B cell (primary cell): ENCODE measurements at regions of chr22 and their contacts with region 1.

Region 1: DNA sequence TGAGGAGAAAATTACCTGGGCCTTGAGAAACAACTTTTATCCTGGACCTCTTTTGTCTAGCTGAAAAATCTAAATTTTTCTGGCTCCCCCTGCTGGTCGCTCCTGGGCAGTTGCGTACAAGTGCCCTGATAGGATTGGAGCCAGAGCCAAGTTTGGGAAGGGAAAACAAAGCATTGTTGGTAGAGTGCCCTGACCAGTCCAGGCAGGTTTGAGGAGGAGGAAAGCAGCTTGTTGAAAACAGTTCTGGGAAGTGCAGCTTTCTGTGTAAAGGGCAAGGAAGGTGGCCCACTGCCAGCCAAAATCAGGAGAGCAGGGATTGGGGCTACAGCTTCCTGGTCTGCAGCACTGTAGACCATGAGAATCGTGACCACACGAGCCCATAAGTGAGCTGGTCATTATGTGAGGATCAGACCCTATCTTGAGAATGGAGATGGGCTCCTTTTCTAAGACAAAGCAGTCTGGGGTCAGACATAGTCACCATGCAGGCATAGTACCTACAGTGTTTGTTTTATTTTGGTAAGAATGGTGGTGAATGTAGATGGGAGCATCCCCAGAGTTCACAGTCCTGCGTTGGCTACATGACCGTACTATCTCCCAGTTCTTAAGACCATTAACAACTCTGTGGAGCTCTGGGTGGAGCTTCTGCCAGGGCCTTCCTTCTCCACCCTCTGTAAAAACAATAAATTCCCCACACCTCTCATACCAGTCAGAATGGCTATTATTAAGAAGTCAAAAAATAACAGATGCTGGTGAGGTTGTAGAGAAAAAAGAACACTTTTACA is 21.3 kb upstream of the PIK3IP1 start:
- DNase-seq: peak; percentile 68
- ATAC-seq: peak; percentile 64
- H3K4me3 ChIP-seq: no peak overlapping the region
- H3K4me3 Mint-ChIP-seq: no peak overlapping the region
- H3K27ac ChIP-seq: no peak overlapping the region
- H3K27ac Mint-ChIP-seq: no peak overlapping the region
- H3K4me1 ChIP-seq: peaks cover 2 to 7% of the 10 kb centered on the region in 2 donors
- H3K4me1 Mint-ChIP-seq: peaks cover 10% of the 10 kb centered on the region
- H3K27me3 ChIP-seq: no peaks in the 10 kb centered on the region
- H3K27me3 Mint-ChIP-seq: no peaks in the 10 kb centered on the region
- CTCF ChIP-seq: peak; percentile 94

Region 2: DNA sequence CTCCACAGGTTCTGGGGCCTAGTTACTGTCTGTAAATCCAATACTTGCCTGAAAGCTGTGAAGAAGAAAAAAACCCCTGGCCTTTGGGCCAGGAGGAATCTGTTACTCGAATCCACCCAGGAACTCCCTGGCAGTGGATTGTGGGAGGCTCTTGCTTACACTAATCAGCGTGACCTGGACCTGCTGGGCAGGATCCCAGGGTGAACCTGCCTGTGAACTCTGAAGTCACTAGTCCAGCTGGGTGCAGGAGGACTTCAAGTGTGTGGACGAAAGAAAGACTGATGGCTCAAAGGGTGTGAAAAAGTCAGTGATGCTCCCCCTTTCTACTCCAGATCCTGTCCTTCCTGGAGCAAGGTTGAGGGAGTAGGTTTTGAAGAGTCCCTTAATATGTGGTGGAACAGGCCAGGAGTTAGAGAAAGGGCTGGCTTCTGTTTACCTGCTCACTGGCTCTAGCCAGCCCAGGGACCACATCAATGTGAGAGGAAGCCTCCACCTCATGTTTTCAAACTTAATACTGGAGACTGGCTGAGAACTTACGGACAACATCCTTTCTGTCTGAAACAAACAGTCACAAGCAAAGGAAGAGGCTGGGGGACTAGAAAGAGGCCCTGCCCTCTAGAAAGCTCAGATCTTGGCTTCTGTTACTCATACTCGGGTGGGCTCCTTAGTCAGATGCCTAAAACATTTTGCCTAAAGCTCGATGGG is 34.8 kb before region 1 on chr22:
- CTCF ChIA-PET with region 1: interaction called, 41 read pairs
- POLR2A ChIA-PET with region 1: no interaction called
- intact Hi-C with region 1: no loop called
- DNase-seq: no peak
- ATAC-seq: no peak
- H3K4me3 ChIP-seq: no peak overlapping the region
- H3K4me3 Mint-ChIP-seq: no peak overlapping the region
- H3K27ac ChIP-seq: peak overlapping the region in 1 of 2 donors; percentile 44
- H3K27ac Mint-ChIP-seq: peak overlapping the region; percentile 17
- H3K4me1 ChIP-seq: no peaks in the 10 kb centered on the region
- H3K4me1 Mint-ChIP-seq: peaks cover 5% of the 10 kb centered on the region
- H3K27me3 ChIP-seq: no peaks in the 10 kb centered on the region
- H3K27me3 Mint-ChIP-seq: no peaks in the 10 kb centered on the region
- CTCF ChIP-seq: no peak

Region 3: GRCh38 chr22:31284281-31285155 is 29.0 kb before region 1 on chr22:
- CTCF ChIA-PET with region 1: interaction called, 208 read pairs
- POLR2A ChIA-PET with region 1: no interaction called
- intact Hi-C with region 1: no loop called
- DNase-seq: no peak
- ATAC-seq: no peak
- H3K4me3 ChIP-seq: no peak overlapping the region
- H3K4me3 Mint-ChIP-seq: no peak overlapping the region
- H3K27ac ChIP-seq: peak overlapping the region; percentile 99 to 100
- H3K27ac Mint-ChIP-seq: peak overlapping the region; percentile 78
- H3K4me1 ChIP-seq: peaks cover 48 to 52% of the 10 kb centered on the region in 2 donors
- H3K4me1 Mint-ChIP-seq: peaks cover 47% of the 10 kb centered on the region
- H3K27me3 ChIP-seq: no peaks in the 10 kb centered on the region
- H3K27me3 Mint-ChIP-seq: no peaks in the 10 kb centered on the region
- CTCF ChIP-seq: no peak

Region 4: GRCh38 chr22:31439808-31440207 is 126.3 kb after region 1 on chr22:
- CTCF ChIA-PET with region 1: no interaction called
- POLR2A ChIA-PET with region 1: no interaction called
- intact Hi-C with region 1: no loop called
- DNase-seq: no peak
- ATAC-seq: no peak
- H3K4me3 ChIP-seq: no peak overlapping the region
- H3K4me3 Mint-ChIP-seq: no peak overlapping the region
- H3K27ac ChIP-seq: no peak overlapping the region
- H3K27ac Mint-ChIP-seq: no peak overlapping the region
- H3K4me1 ChIP-seq: no peaks in the 10 kb centered on the region
- H3K4me1 Mint-ChIP-seq: no peaks in the 10 kb centered on the region
- H3K27me3 ChIP-seq: no peaks in the 10 kb centered on the region
- H3K27me3 Mint-ChIP-seq: no peaks in the 10 kb centered on the region
- CTCF ChIP-seq: no peak

Region 5: GRCh38 chr22:31544481-31545480 is 231.2 kb after region 1 on chr22:
- CTCF ChIA-PET with region 1: no interaction called
- POLR2A ChIA-PET with region 1: no interaction called
- intact Hi-C with region 1: no loop called
- DNase-seq: no peak
- ATAC-seq: no peak
- H3K4me3 ChIP-seq: no peak overlapping the region
- H3K4me3 Mint-ChIP-seq: no peak overlapping the region
- H3K27ac ChIP-seq: no peak overlapping the region
- H3K27ac Mint-ChIP-seq: no peak overlapping the region
- H3K4me1 ChIP-seq: no peaks in the 10 kb centered on the region
- H3K4me1 Mint-ChIP-seq: no peaks in the 10 kb centered on the region
- H3K27me3 ChIP-seq: no peaks in the 10 kb centered on the region
- H3K27me3 Mint-ChIP-seq: no peaks in the 10 kb centered on the region
- CTCF ChIP-seq: no peak